ENCODE measurements at regions of chr15 and their contacts with region 1.

Region 1: GRCh38 chr15:51907136-51907914 is 64.3 kb downstream of the LEO1 start:
- DNase-seq: peak; percentile 94
- ATAC-seq: peak; percentile 98
- H3K4me3 ChIP-seq: no peak overlapping the region
- H3K27ac ChIP-seq: peak overlapping the region; percentile 43
- H3K4me1 ChIP-seq: peaks cover 42% of the 10 kb centered on the region
- H3K27me3 ChIP-seq: no peaks in the 10 kb centered on the region
- CTCF ChIP-seq: peak; percentile 68
- EP300 ChIP-seq: peak in 1 of 2 experiments; percentile 52; a peak in 1 of 4 replicates
- POLR2A ChIP-seq: 0 out of 4 replicates have a peak, but pooled peaks of 1 of the 2 experiments have one; percentile 30
- RAD21 ChIP-seq: peak; percentile 42; the same call in 1 of the 2 replicates

Region 2: GRCh38 chr15:51602484-51602883 is 304.8 kb before region 1 on chr15:
- CTCF ChIA-PET with region 1: no interaction called
- POLR2A ChIA-PET with region 1: no interaction called
- in situ Hi-C with region 1: no loop called
- intact Hi-C with region 1: no loop called
- DNase-seq: no peak
- ATAC-seq: no peak
- H3K4me3 ChIP-seq: no peak overlapping the region
- H3K27ac ChIP-seq: no peak overlapping the region
- H3K4me1 ChIP-seq: no peaks in the 10 kb centered on the region
- H3K27me3 ChIP-seq: no peaks in the 10 kb centered on the region
- CTCF ChIP-seq: no peak
- EP300 ChIP-seq: no peak
- POLR2A ChIP-seq: no peak
- RAD21 ChIP-seq: no peak

Region 3: DNA sequence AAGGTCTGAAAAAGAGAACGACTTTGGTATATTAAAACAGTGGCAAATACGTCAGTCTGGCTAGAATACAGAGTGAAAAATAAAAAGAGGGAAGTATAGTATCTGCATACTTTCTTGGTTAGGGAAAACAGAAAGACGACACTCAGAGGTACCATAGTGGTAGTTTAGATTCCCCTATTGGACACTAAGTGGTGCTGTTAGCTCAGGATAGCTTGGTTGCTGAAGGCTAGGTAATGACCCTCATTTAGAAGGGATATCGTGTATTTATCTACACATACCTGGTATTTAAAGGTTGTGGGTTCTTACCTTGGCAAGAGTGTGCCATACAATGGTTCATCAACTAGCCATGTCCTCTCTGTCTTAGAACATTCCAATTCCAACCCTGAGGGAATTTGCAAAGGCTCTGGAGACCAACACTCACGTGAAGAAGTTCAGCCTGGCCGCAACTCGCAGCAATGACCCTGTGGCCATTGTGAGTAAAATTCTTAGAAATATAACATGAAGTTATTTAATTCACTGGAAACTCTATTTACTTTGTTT is 124.9 kb before region 1 on chr15:
- CTCF ChIA-PET with region 1: no interaction called
- POLR2A ChIA-PET with region 1: no interaction called
- in situ Hi-C with region 1: no loop called
- intact Hi-C with region 1: loop called (anchors 5 kb)
- DNase-seq: no peak
- ATAC-seq: peak; percentile 47; the same call in 1 of the 3 replicates
- H3K4me3 ChIP-seq: no peak overlapping the region
- H3K27ac ChIP-seq: no peak overlapping the region
- H3K4me1 ChIP-seq: peaks cover 7% of the 10 kb centered on the region
- H3K27me3 ChIP-seq: no peaks in the 10 kb centered on the region; a peak in 1 of 5 replicates
- CTCF ChIP-seq: peak; percentile 76
- EP300 ChIP-seq: no peak
- POLR2A ChIP-seq: no peak
- RAD21 ChIP-seq: no peak

Region 4: GRCh38 chr15:51801391-51801835 is 105.9 kb before region 1 on chr15:
- CTCF ChIA-PET with region 1: no interaction called
- POLR2A ChIA-PET with region 1: no interaction called
- in situ Hi-C with region 1: no loop called
- intact Hi-C with region 1: no loop called
- DNase-seq: peak; percentile 20
- ATAC-seq: peak; percentile 92
- H3K4me3 ChIP-seq: no peak overlapping the region
- H3K27ac ChIP-seq: no peak overlapping the region
- H3K4me1 ChIP-seq: peaks cover 8% of the 10 kb centered on the region
- H3K27me3 ChIP-seq: no peaks in the 10 kb centered on the region
- CTCF ChIP-seq: peak; percentile 55
- EP300 ChIP-seq: no peak
- POLR2A ChIP-seq: no peak
- RAD21 ChIP-seq: no peak

Region 5: GRCh38 chr15:51829360-51830275 is 77.7 kb before region 1 on chr15 and contains the start of gene TMOD3:
- CTCF ChIA-PET with region 1: no interaction called
- POLR2A ChIA-PET with region 1: no interaction called
- in situ Hi-C with region 1: no loop called
- intact Hi-C with region 1: loop called (anchors 5 kb)
- DNase-seq: peak; percentile 83
- ATAC-seq: peak; percentile 95
- H3K4me3 ChIP-seq: peak within 1 kb of the TSS; percentile 83 to 92 (median 84)
- H3K27ac ChIP-seq: peak within 1 kb of the TSS; percentile 73
- H3K4me1 ChIP-seq: peaks cover 48% of the 10 kb centered on the region
- H3K27me3 ChIP-seq: no peaks in the 10 kb centered on the region
- CTCF ChIP-seq: peak; percentile 35; the same call in 1 of the 2 replicates
- EP300 ChIP-seq: no peak
- POLR2A ChIP-seq: peak; percentile 79 to 96
- RAD21 ChIP-seq: no peak; the same call in 1 of the 2 replicates
- total RNA-seq, gene TMOD3: 23.2 and 33.7 TPM in 2 replicates